AG04450 (cell line): ENCODE measurements at regions of chr6 and their contacts with region 1.

Region 1: GRCh38 chr6:108113557-108114519 is 39.3 kb upstream of the OSTM1 start:
- DNase-seq: peak; percentile 8
- H3K4me3 ChIP-seq: peak overlapping the region; percentile 42
- H3K27ac ChIP-seq: no peak overlapping the region
- H3K27me3 ChIP-seq: peaks cover 77% of the 10 kb centered on the region
- CTCF ChIP-seq: peak; percentile 65

Region 2: GRCh38 chr6:108497883-108498282 is 384.0 kb after region 1 on chr6:
- CTCF ChIA-PET with region 1: interaction called, 98 read pairs
- POLR2A ChIA-PET with region 1: no interaction called
- DNase-seq: no peak
- H3K4me3 ChIP-seq: no peak overlapping the region
- H3K27ac ChIP-seq: no peak overlapping the region
- H3K27me3 ChIP-seq: no peaks in the 10 kb centered on the region
- CTCF ChIP-seq: peak; percentile 61

Region 3: GRCh38 chr6:108526739-108527174 is 412.9 kb after region 1 on chr6:
- CTCF ChIA-PET with region 1: interaction called, 13 read pairs
- POLR2A ChIA-PET with region 1: no interaction called
- DNase-seq: peak; percentile 7
- H3K4me3 ChIP-seq: no peak overlapping the region
- H3K27ac ChIP-seq: no peak overlapping the region
- H3K27me3 ChIP-seq: peaks cover 9% of the 10 kb centered on the region
- CTCF ChIP-seq: peak; percentile 90